RWPE1 (cell line): ENCODE measurements at regions of chr19 and their contacts with region 1.

Region 1: DNA sequence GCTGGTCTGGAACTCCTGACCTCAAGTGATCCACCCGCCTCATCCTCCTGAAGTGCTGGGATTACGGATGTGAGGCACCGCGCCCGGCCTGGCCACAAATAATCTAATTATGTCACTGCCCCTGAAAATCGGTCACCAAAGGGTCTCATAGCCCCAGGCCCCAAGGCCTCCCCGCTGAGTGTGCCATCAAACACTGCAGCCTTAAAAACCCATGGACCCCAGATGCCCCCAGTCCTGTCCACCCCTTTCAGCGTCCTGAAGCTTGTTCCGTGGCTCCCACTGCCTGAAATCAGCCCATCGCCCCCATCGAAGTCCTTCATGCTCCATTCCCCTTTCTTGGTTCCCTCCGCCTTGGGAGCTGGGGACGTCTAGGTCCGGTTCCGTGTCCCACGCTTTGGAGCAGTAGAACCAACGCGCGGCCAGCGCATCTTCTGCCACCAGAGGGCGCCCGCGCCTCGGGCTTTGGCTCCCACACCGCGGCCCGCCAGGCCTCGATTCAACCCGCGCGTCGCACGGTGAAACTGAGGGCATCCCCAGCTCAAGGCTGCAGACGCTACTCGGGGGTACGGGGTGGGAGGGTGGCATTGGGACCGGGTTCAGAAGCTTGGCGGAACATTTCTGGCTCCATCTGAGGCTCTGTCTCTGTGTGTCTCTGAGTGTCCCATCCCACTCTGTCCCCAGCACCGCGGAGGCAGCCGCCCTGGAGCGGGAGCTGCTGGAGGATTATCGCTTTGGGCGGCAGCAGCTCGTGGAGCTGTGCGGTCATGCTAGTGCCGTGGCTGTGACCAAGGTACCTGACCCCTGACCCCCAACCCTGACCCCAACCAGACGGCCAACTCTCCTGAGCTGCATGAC is 3.5 kb downstream of the YJEFN3 start:
- DNase-seq: peak; percentile 67
- H3K27ac ChIP-seq: 0 out of 2 replicates have a peak overlapping the region, but pooled peaks have one; percentile 2
- CTCF ChIP-seq: peak; percentile 98

Region 2: GRCh38 chr19:19643158-19644053 is 111.2 kb after region 1 on chr19 and contains the start of gene GMIP:
- CTCF ChIA-PET with region 1: interaction called, 33 read pairs
- POLR2A ChIA-PET with region 1: no interaction called
- DNase-seq: peak; percentile 86
- H3K27ac ChIP-seq: peak within 1 kb of the TSS; percentile 79
- CTCF ChIP-seq: peak; percentile 95

Region 3: DNA sequence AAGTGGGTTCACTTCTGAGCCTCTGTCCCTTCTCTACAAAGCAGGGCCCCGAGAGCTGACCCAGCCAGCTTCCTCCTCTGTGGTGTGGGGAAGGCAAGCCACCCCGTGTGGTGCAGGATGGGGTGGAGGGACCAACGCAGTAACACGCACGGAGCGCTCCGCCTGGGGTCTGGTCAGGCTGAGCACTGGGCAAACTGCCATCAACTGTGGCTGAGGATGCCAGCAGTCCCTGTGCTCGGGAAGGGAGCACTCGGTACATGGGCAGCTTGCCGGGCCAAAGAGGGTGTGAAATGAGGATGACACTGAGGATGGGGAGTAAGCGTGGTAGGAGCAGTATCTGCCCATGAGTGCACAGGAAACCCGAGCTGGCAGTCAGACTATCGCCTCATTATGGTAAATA is 118.9 kb after region 1 on chr19:
- CTCF ChIA-PET with region 1: interaction called, 10 read pairs
- POLR2A ChIA-PET with region 1: no interaction called
- DNase-seq: no peak
- H3K27ac ChIP-seq: 0 out of 2 replicates have a peak overlapping the region, but pooled peaks have one; percentile 1
- CTCF ChIP-seq: no peak